ENCODE measurements at regions of chr5 and their contacts with region 1.

Region 1: DNA sequence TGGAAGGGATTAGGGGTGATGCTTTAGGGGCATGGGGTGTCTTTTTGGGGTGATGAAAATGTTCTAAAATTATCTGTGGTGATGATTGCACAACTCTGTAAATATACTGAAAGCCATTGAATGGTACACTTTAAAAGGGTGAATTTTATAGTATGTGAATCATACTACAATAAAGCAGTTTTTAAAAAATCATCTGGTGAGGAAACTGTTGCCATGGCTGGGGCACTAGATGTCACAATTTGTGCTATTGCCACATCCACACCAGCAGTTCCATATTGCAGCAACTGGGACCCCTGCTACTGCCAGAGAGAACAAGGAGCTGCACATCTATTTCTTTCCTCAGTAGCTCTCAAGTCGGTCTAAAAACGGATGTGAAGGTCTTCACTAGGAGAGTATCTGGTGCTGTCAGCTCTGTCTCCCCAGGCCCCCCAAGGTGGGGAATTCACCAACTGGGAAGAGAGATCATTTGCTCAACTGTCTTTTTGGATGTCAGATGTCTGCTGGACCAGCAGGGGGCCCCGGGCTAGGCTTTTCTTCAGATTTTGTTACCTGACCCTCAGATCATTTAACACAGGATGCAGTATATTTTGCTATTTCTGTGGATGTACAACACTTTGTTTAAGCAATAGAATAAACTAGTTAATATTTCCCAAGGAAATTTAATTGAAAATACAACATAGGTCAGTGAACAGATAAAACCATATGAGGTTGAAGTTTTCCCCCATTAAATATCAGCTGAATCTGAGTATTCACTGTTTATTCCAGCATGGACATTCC is 13.2 kb downstream of the CMYA5 start:
- DNase-seq: peak in 7 of 9 experiments; percentile 5 to 55 (median 32)
- ATAC-seq: no peak
- H3K4me3 ChIP-seq: no peak overlapping the region
- H3K4me3 Mint-ChIP-seq: no peak overlapping the region
- H3K27ac ChIP-seq: no peak overlapping the region
- H3K27ac Mint-ChIP-seq: no peak overlapping the region
- H3K4me1 ChIP-seq: no peaks in the 10 kb centered on the region
- H3K4me1 Mint-ChIP-seq: no peaks in the 10 kb centered on the region
- H3K27me3 ChIP-seq: no peaks in the 10 kb centered on the region
- H3K27me3 Mint-ChIP-seq: no peaks in the 10 kb centered on the region
- CTCF ChIP-seq: peak; percentile 73

Region 2: GRCh38 chr5:79774171-79774854 is 71.5 kb after region 1 on chr5:
- CTCF ChIA-PET with region 1: interaction called, 13 read pairs
- POLR2A ChIA-PET with region 1: interaction called, 3 read pairs
- intact Hi-C with region 1: no loop called
- DNase-seq: peak in 2 of 9 experiments; percentile 6 to 33
- ATAC-seq: no peak
- H3K4me3 ChIP-seq: no peak overlapping the region
- H3K4me3 Mint-ChIP-seq: peak overlapping the region; percentile 54
- H3K27ac ChIP-seq: no peak overlapping the region
- H3K27ac Mint-ChIP-seq: no peak overlapping the region
- H3K4me1 ChIP-seq: no peaks in the 10 kb centered on the region
- H3K4me1 Mint-ChIP-seq: peaks cover 8% of the 10 kb centered on the region
- H3K27me3 ChIP-seq: no peaks in the 10 kb centered on the region
- H3K27me3 Mint-ChIP-seq: peaks cover 4% of the 10 kb centered on the region
- CTCF ChIP-seq: no peak

Measured in CD8-positive, alpha-beta T cell (primary cell).